ENCODE measurements at regions of chr12 and their contacts with region 1.

Region 1: GRCh38 chr12:115866909-115867525 is 410.5 kb downstream of the MED13L start:
- DNase-seq: peak; percentile 19
- ATAC-seq: peak; percentile 52
- H3K4me3 Mint-ChIP-seq: no peak overlapping the region
- H3K27ac Mint-ChIP-seq: no peak overlapping the region
- H3K4me1 Mint-ChIP-seq: peaks cover 37% of the 10 kb centered on the region
- H3K27me3 Mint-ChIP-seq: no peaks in the 10 kb centered on the region
- CTCF ChIP-seq: no peak

Region 2: DNA sequence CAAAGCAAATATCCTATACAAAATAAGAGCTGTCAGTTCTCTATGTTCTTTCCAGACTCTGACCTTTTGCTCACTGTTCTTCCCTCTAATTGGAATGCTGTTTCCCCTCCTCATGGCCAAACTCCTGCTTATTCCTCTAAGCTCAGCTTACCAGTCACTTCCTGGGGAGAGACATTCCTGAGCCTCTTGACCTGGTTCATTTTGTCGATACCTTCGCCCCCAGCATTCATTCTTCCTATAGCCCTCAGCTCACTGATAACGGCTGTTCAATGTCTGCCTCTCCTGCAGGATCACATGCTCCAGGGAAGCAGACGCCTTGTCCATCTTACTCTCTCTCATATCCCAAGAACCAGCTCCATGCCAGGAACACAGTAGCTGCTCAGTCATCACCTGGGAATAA is 20.5 kb before region 1 on chr12:
- CTCF ChIA-PET with region 1: no interaction called
- POLR2A ChIA-PET with region 1: no interaction called
- DNase-seq: no peak
- ATAC-seq: peak; percentile 36; the same call in 1 of the 2 replicates
- H3K4me3 Mint-ChIP-seq: no peak overlapping the region
- H3K27ac Mint-ChIP-seq: no peak overlapping the region
- H3K4me1 Mint-ChIP-seq: peaks cover 3% of the 10 kb centered on the region
- H3K27me3 Mint-ChIP-seq: no peaks in the 10 kb centered on the region; the same call in 1 of the 2 replicates
- CTCF ChIP-seq: no peak

Region 3: GRCh38 chr12:115916910-115917668 is 50.1 kb after region 1 on chr12:
- CTCF ChIA-PET with region 1: interaction called, 11 read pairs
- POLR2A ChIA-PET with region 1: interaction called, 3 read pairs
- DNase-seq: peak; percentile 93
- ATAC-seq: peak; percentile 95
- H3K4me3 Mint-ChIP-seq: peak overlapping the region; percentile 69
- H3K27ac Mint-ChIP-seq: no peak overlapping the region
- H3K4me1 Mint-ChIP-seq: 0 out of 2 replicates have a peak, but pooled peaks cover 8% of the 10 kb centered on the region
- H3K27me3 Mint-ChIP-seq: peaks cover 38% of the 10 kb centered on the region
- CTCF ChIP-seq: peak; percentile 96

Region 4: GRCh38 chr12:116015525-116015924 is 148.5 kb after region 1 on chr12:
- CTCF ChIA-PET with region 1: no interaction called
- POLR2A ChIA-PET with region 1: no interaction called
- DNase-seq: no peak
- ATAC-seq: peak; percentile 48
- H3K4me3 Mint-ChIP-seq: no peak overlapping the region
- H3K27ac Mint-ChIP-seq: no peak overlapping the region
- H3K4me1 Mint-ChIP-seq: peaks cover 9% of the 10 kb centered on the region
- H3K27me3 Mint-ChIP-seq: no peaks in the 10 kb centered on the region
- CTCF ChIP-seq: no peak

Measured in WTC11 (cell line).